ENCODE measurements at regions of chr6 and their contacts with region 1.

Region 1: GRCh38 chr6:2738373-2738979 is 12.2 kb downstream of the MYLK4 start:
- H3K4me3 Mint-ChIP-seq: no peak overlapping the region
- H3K27ac Mint-ChIP-seq: no peak overlapping the region
- H3K4me1 Mint-ChIP-seq: peaks cover 22% of the 10 kb centered on the region
- H3K27me3 Mint-ChIP-seq: no peaks in the 10 kb centered on the region

Region 2: DNA sequence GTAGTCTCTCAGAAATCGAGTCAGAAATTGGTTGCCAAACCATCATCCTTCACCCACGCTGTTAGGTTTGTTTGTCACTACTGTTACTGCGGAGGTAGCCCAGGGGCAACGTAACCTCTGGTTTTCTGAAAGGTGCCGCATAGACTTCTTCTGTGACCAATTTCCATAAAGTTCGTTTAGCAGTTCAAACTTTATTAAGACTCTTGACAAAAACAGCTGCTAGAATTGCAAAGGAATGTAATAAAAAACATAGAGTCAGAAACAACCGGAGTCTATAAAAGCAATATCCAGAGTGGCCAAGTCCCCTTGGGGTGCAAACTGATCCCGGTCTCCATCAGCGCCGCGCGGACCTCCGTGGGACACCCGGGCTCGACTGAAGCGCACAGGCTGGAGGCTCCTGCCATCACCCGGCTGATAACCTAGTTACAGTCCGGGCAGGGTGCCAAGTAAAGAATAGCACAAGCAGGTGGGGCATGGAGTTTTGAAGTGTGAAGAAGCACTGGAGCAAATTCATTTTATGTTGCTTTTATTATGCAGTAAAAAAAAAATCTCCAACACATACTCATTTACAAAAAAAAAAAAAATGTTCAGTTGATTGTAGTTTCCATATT is 288.0 kb before region 1 on chr6:
- intact Hi-C with region 1: no loop called
- H3K4me3 Mint-ChIP-seq: no peak overlapping the region
- H3K27ac Mint-ChIP-seq: no peak overlapping the region
- H3K4me1 Mint-ChIP-seq: no peaks in the 10 kb centered on the region
- H3K27me3 Mint-ChIP-seq: peaks cover 3% of the 10 kb centered on the region

Region 3: DNA sequence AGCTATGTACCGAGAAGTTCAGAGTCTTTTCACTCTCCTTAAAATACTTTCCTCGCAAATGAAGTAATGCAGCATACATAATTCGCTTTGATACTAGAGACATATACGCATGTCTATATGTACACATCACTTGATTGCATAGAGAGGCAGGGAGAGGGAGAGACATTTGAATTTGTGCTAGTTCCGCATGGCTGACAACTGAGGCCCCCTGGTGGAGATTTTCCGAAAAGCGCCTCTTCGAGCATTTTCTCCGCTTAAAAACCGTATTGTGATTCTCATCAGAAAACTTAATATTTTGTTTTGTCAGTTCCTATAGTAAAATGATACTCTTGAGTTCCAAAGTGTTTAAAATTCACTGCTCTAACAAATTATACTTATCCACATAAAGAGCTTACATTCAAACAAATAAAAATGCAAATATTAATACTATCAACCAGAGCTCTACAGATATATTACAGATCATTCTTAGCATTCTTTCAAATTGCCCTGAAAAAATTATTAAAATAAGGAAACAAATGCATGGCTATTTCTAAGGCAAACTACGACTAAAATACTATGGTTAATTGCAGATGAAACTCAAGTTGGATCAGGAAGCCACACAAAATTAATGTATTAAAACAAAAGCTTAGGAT is 11.6 kb after region 1 on chr6:
- intact Hi-C with region 1: loop called (anchors 1 kb)
- H3K4me3 Mint-ChIP-seq: no peak overlapping the region
- H3K27ac Mint-ChIP-seq: no peak overlapping the region
- H3K4me1 Mint-ChIP-seq: no peaks in the 10 kb centered on the region
- H3K27me3 Mint-ChIP-seq: peaks cover 7% of the 10 kb centered on the region

Region 4: DNA sequence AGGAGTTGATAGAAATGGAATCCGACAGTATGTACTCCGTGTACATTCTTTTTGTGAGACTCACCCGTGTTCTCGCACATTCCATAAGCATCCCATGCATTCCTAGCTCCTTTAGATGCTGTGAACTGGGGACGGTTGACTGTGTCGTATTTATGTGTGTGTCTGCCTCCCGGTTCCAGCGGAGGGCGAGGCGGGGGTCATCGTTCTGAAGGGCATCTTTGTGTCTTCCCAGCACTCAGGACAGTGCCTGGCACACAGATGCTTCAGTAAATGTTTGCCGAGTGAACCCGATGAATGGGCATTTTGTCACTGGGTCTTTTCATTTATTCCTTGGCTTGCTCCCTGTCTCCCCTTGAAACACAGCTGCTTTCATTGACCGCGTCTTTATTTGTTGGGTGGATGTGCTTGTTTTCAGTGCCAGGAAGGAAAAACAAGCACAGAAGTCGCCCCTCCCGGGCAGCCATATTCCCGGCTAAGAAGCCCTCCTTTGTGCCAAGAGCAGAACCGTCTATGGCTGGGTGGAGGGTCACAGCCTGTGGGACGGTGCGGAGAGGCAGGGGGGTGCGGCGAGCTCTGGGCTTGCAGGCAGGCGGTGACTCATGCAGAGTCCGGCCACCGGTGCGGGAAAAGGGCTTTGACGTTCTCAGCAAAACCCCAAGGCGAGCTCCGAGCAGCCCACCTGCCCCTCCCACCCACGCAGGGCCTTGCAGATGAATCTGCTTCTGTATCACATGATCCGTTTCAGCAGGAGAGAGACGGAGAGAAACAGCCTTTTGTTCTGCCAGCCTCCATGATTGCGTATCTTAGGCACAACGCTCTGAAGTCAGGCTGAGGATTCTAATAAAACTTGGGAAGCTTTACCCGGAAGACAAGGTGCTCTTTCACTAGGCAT is 509.0 kb after region 1 on chr6:
- intact Hi-C with region 1: no loop called
- H3K4me3 Mint-ChIP-seq: no peak overlapping the region
- H3K27ac Mint-ChIP-seq: no peak overlapping the region
- H3K4me1 Mint-ChIP-seq: peaks cover 16% of the 10 kb centered on the region
- H3K27me3 Mint-ChIP-seq: peaks cover 63% of the 10 kb centered on the region

Measured in dendritic cell treated with granulocyte-macrophage colony-stimulating factor and Interleukin-4, amounts not matched to agents 40 ng/mL and 50 ng/mL, for 4 days (primary cell).